ENCODE measurements at regions of chr1 and their contacts with region 1.

Region 1: GRCh38 chr1:110106013-110106941 is 6.0 kb upstream of the UBL4B start:
- DNase-seq: peak; percentile 19 to 53 (median 47)
- ATAC-seq: peak; percentile 85
- H3K4me3 ChIP-seq: no peak overlapping the region
- H3K4me3 Mint-ChIP-seq: no peak overlapping the region
- H3K27ac ChIP-seq: no peak overlapping the region
- H3K27ac Mint-ChIP-seq: no peak overlapping the region
- H3K4me1 ChIP-seq: no peaks in the 10 kb centered on the region
- H3K4me1 Mint-ChIP-seq: peaks cover 0 to 6% (median 0%) of the 10 kb centered on the region in 7 donors
- H3K27me3 ChIP-seq: no peaks in the 10 kb centered on the region
- H3K27me3 Mint-ChIP-seq: peaks cover 6 to 20% (median 10%) of the 10 kb centered on the region in 5 donors

Region 2: DNA sequence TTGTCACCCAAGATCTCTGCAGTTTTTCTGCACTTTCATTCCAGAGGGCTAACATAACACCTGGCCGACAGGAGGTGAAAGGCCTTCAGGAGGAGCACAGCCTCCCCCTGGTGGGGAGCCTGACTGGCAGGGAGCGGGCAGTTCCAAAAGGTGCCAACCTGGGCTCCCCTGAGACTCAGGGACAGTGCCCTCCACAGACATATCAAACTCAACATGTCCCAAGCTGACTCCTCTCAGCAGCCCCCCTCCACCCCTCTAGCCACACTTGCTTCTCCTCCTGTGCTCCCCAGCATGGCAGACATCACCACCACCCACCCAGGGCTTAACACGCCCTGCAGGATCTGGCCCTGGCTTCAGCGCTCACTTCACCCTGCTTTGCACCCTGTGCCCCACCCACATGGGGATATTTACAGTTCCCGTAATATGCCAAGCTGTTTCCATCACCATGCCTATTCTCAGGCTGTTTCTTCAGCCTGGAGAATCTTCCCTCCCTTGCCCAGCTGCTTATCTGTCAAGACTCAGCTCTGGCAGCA is 125.5 kb before region 1 on chr1:
- CTCF ChIA-PET with region 1: no interaction called
- POLR2A ChIA-PET with region 1: no interaction called
- intact Hi-C with region 1: no loop called
- DNase-seq: peak in 3 of 9 donors; percentile 9 to 13 (median 11)
- ATAC-seq: no peak
- H3K4me3 ChIP-seq: no peak overlapping the region
- H3K4me3 Mint-ChIP-seq: no peak overlapping the region
- H3K27ac ChIP-seq: no peak overlapping the region
- H3K27ac Mint-ChIP-seq: no peak overlapping the region
- H3K4me1 ChIP-seq: peaks cover 10 to 11% of the 10 kb centered on the region in 2 donors
- H3K4me1 Mint-ChIP-seq: peaks cover 5 to 22% (median 9%) of the 10 kb centered on the region in 7 donors
- H3K27me3 ChIP-seq: no peaks in the 10 kb centered on the region
- H3K27me3 Mint-ChIP-seq: peaks cover 3 to 20% (median 15%) of the 10 kb centered on the region in 5 donors

Region 3: DNA sequence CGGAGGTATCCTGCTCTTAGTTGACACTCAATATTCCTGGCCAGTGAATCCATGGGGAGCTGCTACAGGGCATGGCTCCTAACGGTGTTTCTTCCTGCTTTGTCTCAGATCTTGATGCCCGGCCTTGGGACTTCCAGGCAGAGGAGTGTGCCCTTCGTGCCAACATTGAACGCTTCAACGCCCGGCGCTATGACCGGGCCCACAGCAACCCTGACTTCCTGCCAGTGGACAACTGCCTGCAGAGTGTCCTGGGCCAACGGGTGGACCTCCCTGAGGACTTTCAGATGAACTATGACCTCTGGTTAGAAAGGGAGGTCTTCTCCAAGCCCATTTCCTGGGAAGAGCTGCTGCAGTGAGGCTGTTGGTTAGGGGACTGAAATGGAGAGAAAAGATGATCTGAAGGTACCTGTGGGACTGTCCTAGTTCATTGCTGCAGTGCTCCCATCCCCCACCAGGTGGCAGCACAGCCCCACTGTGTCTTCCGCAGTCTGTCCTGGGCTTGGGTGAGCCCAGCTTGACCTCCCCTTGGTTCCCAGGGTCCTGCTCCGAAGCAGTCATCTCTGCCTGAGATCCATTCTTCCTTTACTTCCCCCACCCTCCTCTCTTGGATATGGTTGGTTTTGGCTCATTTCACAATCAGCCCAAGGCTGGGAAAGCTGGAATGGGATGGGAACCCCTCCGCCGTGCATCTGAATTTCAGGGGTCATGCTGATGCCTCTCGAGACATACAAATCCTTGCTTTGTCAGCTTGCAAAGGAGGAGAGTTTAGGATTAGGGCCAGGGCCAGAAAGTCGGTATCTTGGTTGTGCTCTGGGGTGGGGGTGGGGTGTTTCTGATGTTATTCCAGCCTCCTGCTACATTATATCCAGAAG is 52.5 kb before region 1 on chr1:
- CTCF ChIA-PET with region 1: interaction called, 19 read pairs
- POLR2A ChIA-PET with region 1: no interaction called
- intact Hi-C with region 1: loop called (anchors 1 kb)
- DNase-seq: peak; percentile 24 to 76 (median 58)
- ATAC-seq: peak; percentile 87
- H3K4me3 ChIP-seq: no peak overlapping the region
- H3K4me3 Mint-ChIP-seq: no peak overlapping the region
- H3K27ac ChIP-seq: no peak overlapping the region
- H3K27ac Mint-ChIP-seq: peak overlapping the region in 1 of 9 donors; percentile 43
- H3K4me1 ChIP-seq: no peaks in the 10 kb centered on the region
- H3K4me1 Mint-ChIP-seq: peaks cover 0 to 11% (median under 1%) of the 10 kb centered on the region in 7 donors
- H3K27me3 ChIP-seq: no peaks in the 10 kb centered on the region
- H3K27me3 Mint-ChIP-seq: no peaks in the 10 kb centered on the region

Region 4: GRCh38 chr1:110087812-110088738 is 18.2 kb before region 1 on chr1:
- CTCF ChIA-PET with region 1: interaction called, 16 read pairs
- POLR2A ChIA-PET with region 1: no interaction called
- intact Hi-C with region 1: loop called (anchors 1 kb)
- DNase-seq: peak in 7 of 9 donors; percentile 28 to 49 (median 35)
- ATAC-seq: peak; percentile 73
- H3K4me3 ChIP-seq: no peak overlapping the region
- H3K4me3 Mint-ChIP-seq: no peak overlapping the region
- H3K27ac ChIP-seq: no peak overlapping the region
- H3K27ac Mint-ChIP-seq: peak overlapping the region in 1 of 9 donors; percentile 13
- H3K4me1 ChIP-seq: no peaks in the 10 kb centered on the region
- H3K4me1 Mint-ChIP-seq: peaks cover 6 to 19% (median 11%) of the 10 kb centered on the region in 7 donors
- H3K27me3 ChIP-seq: peaks cover 0 to 10% of the 10 kb centered on the region in 2 donors
- H3K27me3 Mint-ChIP-seq: peaks cover 37 to 68% (median 50%) of the 10 kb centered on the region in 5 donors